Ascending aorta (tissue), 2 donors: ENCODE measurements at regions of chr2 and their contacts with region 1.

Region 1: DNA sequence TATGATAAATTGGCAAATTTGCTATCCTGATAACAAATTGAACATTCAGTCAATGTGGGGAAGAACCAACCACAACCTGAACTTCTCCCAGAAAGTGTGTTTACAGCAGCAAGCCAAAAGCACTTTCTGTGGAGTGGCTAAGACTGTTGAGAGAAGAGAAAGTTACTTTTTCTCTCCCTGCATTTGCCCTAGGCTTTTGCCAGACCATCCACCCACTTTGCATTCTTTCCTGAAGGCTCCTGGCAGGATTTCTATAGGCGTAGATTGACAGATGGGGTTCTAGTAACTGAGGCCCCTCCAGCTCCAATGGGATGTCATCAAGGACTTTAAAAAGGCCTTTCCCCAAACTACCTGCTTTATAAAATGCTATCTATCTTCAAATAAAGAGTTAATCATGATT is 215.2 kb downstream of the GULP1 start:
- DNase-seq: no peak
- H3K4me3 ChIP-seq: no peak overlapping the region
- H3K27ac ChIP-seq: no peak overlapping the region
- H3K4me1 ChIP-seq: peaks cover 0 to 5% of the 10 kb centered on the region in 2 donors
- H3K27me3 ChIP-seq: no peaks in the 10 kb centered on the region
- CTCF ChIP-seq: no peak

Region 2: DNA sequence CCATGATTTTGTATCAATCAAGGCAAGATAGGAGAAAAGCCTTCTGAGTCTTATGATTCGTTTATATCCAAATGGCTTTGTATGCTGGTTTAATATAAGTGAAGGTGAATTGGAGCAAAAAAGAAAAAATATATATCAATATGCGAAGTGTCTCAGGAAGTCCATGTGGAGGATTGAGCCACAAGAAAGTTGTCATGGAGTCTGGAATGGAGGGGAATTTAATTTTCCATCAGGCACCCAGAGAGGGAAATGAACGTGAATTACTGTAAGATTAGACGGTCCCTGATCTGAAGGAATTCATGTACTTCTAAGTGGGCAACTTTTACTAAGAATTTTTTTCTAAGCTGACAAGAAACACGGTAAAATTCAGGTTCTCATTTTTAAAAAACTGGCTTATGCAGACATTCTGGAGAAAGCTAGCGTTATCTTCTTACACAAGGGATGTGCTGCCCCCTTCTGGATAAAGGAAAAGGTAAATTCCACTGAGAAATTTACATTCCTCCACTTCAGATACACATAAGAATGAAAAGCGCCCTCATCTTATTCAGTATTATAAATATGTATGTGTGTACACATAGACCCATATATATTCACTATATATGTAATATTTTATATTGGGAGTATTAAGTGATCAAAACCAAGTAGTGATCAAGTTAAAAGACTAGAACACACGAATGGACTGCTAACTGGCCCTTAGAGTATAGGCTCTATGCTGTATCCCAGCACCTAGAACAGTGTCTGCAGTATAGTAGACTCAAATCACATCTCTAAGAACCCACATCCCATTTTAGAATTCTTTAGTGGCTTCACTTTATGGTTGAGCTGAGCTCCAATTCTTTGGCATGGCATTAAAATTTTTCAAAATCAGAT is 663.6 kb before region 1 on chr2:
- intact Hi-C with region 1: loop called (anchors 5 kb)
- DNase-seq: no peak
- H3K4me3 ChIP-seq: no peak overlapping the region
- H3K27ac ChIP-seq: peak overlapping the region in 1 of 2 donors; percentile 52
- H3K4me1 ChIP-seq: peaks cover 0 to 4% of the 10 kb centered on the region in 2 donors
- H3K27me3 ChIP-seq: no peaks in the 10 kb centered on the region
- CTCF ChIP-seq: peak; percentile 57 to 65 (median 58)

Region 3: DNA sequence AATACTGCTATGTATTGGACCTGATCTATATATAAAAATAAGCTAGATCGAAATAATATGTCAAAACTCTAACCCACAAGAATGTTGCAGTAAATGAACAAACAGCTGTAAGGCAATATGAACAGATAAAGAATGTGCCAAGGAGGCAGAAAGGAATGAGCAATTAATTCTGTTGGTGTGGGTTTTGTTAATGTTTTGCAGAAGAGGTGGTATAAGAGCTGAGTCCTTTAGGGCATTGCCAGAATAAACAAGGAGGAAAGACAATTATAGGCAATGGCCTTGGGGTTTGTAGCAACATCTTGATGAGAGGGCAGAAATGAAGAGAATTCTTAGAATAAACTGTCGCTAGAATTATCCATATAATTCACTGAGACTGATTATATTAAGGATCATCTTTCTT is 456.1 kb before region 1 on chr2:
- intact Hi-C with region 1: no loop called
- DNase-seq: no peak
- H3K4me3 ChIP-seq: no peak overlapping the region
- H3K27ac ChIP-seq: no peak overlapping the region
- H3K4me1 ChIP-seq: no peaks in the 10 kb centered on the region
- H3K27me3 ChIP-seq: no peaks in the 10 kb centered on the region
- CTCF ChIP-seq: no peak